Heart left ventricle (tissue), 16 donors: ENCODE measurements at regions of chr16 and their contacts with region 1.

Region 1: GRCh38 chr16:53054670-53055485 is at the start of gene CHD9:
- DNase-seq: peak; percentile 85 to 93 (median 87)
- ATAC-seq: peak; percentile 81 to 94 (median 92)
- H3K4me3 ChIP-seq: peak within 1 kb of the TSS; percentile 38 to 93 (median 78)
- H3K27ac ChIP-seq: peak within 1 kb of the TSS; percentile 81 to 96 (median 91)
- H3K4me1 ChIP-seq: peaks cover 0 to 45% (median 29%) of the 10 kb centered on the region in 12 donors
- H3K27me3 ChIP-seq: no peaks in the 10 kb centered on the region
- CTCF ChIP-seq: peak; percentile 99 to 100 (median 100)
- POLR2A ChIP-seq: peak in 1 of 2 donors; percentile 27
- total RNA-seq, gene CHD9: 37.9 to 56.2 (median 44.1) TPM

Region 2: DNA sequence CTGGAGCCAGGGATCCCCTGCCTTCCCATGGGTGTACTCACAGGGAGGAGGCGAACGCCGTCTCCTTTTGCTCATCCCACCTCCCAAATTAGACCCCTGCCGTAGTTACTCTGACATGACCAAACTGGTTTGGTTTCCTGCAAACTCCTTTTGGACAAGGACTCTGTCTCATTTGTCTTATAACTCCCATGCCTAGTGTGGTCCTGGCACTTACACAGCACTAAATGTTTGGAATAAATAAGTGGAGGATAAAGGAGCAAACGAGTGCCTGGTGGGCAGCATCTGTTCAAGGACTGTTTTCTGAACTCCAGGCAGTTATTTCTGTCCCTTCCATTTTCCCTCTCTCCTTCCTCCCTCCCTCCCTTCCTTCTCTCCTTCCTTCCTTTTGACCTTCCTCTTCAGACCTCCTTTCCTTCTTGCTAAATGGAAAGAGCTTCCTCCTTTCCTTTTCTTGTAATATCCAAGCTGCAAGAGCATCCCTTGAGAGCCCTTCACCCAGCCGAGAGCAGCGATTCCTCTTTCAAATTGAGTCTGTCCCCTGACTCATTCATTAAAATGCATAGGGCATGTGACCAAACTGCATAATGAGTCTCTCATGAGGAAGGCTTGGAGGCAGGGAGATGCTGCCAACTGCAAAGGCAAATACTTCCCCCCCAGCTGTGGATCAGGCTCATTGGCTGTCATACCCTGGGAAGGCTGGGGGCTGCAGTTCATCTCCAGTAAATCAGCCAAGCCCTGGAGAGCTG is 36.8 kb after region 1 on chr16:
- intact Hi-C with region 1: loop called in 2 of 10 experiments (anchors 5 kb)
- DNase-seq: peak; percentile 73 to 85 (median 81)
- ATAC-seq: peak; percentile 24 to 54 (median 44)
- H3K4me3 ChIP-seq: peak overlapping the region in 3 of 12 donors; percentile 0 to 11 (median 7)
- H3K27ac ChIP-seq: peak overlapping the region; percentile 68 to 97 (median 88)
- H3K4me1 ChIP-seq: peaks cover 18 to 68% (median 57%) of the 10 kb centered on the region in 12 donors
- H3K27me3 ChIP-seq: no peaks in the 10 kb centered on the region
- CTCF ChIP-seq: no peak
- POLR2A ChIP-seq: no peak

Region 3: DNA sequence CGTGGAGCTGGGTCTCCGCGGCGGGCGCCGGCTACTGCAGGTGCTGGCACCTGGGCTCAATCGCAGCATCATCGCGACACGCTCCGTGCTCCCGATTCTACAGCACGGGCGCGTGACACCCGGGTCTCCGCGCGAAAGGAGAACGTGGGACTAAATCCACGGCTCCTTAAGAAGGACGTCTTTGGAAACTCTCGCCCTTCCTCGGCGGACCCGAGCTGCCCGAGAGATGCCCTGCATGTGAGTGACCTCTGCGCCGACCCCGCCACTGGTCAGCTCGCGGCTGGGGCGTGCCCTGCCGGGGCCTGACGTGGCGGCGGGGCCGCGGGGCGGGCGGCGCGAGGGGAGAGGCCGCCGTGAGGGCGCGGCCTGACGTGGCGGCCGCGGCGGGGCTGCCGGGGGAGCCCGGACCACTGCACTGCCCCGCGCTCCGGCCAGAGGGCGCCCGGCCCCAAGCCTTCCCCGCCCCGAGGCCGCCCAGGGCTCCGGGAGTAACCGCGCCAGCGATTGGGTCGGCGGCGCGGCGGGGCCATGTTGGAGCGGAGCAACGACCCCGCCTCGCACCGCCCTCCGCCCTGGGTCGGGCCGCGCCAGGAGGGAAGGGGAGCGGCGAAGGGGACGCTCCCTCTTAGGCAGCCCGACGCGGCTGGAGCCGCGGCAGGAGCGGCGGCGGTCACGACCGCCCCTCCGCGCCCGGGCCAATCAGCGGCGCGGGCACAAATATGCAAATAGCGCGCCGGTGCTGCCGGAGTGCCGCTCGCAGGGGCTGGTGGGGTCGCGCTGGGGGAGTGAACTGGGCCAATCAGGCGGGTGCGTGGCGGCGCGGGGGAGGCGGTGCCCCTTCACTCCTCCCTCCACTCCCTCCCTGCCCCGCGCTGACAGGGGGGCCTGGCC is 75.5 kb after region 1 on chr16:
- intact Hi-C with region 1: loop called in 9 of 10 experiments (anchors 1 to 10 kb)
- DNase-seq: peak; percentile 98 to 99 (median 99)
- ATAC-seq: peak; percentile 95 to 96 (median 96)
- H3K4me3 ChIP-seq: peak overlapping the region; percentile 62 to 89 (median 84)
- H3K27ac ChIP-seq: peak overlapping the region; percentile 88 to 98 (median 97)
- H3K4me1 ChIP-seq: peaks cover 0 to 52% (median 26%) of the 10 kb centered on the region in 12 donors
- H3K27me3 ChIP-seq: no peaks in the 10 kb centered on the region
- CTCF ChIP-seq: peak; percentile 31 to 91 (median 68)
- POLR2A ChIP-seq: peak in 1 of 2 donors; percentile 70

Region 4: DNA sequence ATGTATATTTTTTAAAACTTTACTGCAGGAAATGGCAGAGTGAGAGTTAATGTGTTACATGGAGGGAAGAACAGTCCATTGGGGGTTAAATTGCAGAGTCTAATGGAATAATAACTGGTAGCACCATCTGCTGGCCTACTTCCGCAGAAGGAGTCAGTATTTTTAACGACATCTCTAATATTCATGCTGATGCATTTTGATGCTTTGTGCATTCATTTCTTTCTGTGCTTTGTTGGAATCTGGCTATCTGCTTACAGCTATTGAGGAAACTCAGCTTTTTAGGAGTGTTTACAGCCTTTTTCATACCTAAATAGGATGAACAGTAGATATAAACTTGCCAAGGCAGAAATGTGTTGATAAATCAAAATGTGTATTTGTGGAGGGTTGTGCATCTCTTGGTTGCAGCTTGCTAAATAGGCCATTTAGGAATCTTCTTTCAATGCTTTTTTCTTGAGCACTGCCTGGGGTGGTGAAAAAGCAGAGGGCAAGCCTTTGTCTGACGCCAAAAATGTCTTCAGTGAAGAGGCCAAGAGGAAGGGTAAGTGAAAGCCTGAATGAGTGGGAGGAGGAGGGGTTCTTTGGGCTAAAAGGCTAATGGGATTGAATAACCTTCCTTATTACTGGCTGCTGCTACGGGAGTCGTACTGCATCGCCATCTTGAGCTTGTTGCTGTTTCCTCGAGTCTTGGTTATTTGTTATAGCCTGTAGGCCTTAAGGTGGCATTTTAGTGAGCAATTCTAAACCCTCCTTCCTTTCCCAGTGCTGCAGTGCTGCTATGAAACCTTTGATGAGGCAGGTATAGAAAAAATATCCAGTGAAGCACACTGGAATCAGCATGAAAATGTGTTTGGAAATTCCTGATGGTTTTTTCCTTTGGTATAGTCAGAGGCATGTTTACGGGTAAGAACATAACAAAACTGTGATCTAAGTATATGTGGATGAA is 153.2 kb after region 1 on chr16:
- intact Hi-C with region 1: loop called (anchors 1 to 5 kb)
- DNase-seq: peak in 4 of 5 donors; percentile 41 to 52 (median 43)
- ATAC-seq: peak; percentile 90 to 96 (median 93)
- H3K4me3 ChIP-seq: peak overlapping the region; percentile 11 to 65 (median 56)
- H3K27ac ChIP-seq: peak overlapping the region; percentile 66 to 92 (median 82)
- H3K4me1 ChIP-seq: peaks cover 3 to 58% (median 33%) of the 10 kb centered on the region in 12 donors
- H3K27me3 ChIP-seq: no peaks in the 10 kb centered on the region
- CTCF ChIP-seq: peak; percentile 33 to 75 (median 54)
- POLR2A ChIP-seq: no peak

Region 5: GRCh38 chr16:53282975-53283946 is 228.4 kb after region 1 on chr16:
- intact Hi-C with region 1: loop called in 3 of 10 experiments (anchors 2 to 10 kb)
- DNase-seq: no peak
- ATAC-seq: peak in 2 of 4 donors; percentile 41 to 52
- H3K4me3 ChIP-seq: no peak overlapping the region
- H3K27ac ChIP-seq: no peak overlapping the region
- H3K4me1 ChIP-seq: peaks cover 0 to 10% (median 0%) of the 10 kb centered on the region in 12 donors
- H3K27me3 ChIP-seq: no peaks in the 10 kb centered on the region
- CTCF ChIP-seq: peak in 11 of 12 donors; percentile 15 to 64 (median 38)
- POLR2A ChIP-seq: no peak